Mammary epithelial cell (primary cell): ENCODE measurements at regions of chr5 and their contacts with region 1.

Region 1: GRCh38 chr5:54867310-54867944 is 118.0 kb downstream of the ESM1 start:
- DNase-seq: peak; percentile 16
- H3K4me3 ChIP-seq: no peak overlapping the region
- H3K27ac ChIP-seq: no peak overlapping the region
- H3K4me1 ChIP-seq: no peaks in the 10 kb centered on the region
- H3K27me3 ChIP-seq: peaks cover 3% of the 10 kb centered on the region
- CTCF ChIP-seq: peak; percentile 50 to 60

Region 2: GRCh38 chr5:54243473-54244080 is 623.9 kb before region 1 on chr5:
- CTCF ChIA-PET with region 1: interaction called, 4 read pairs
- dilution Hi-C with region 1: no loop called
- in situ Hi-C with region 1: no loop called
- intact Hi-C with region 1: loop called (anchors 10 kb)
- DNase-seq: peak; percentile 20
- H3K4me3 ChIP-seq: no peak overlapping the region
- H3K27ac ChIP-seq: no peak overlapping the region
- H3K4me1 ChIP-seq: no peaks in the 10 kb centered on the region
- H3K27me3 ChIP-seq: no peaks in the 10 kb centered on the region
- CTCF ChIP-seq: peak; percentile 72 to 81

Region 3: DNA sequence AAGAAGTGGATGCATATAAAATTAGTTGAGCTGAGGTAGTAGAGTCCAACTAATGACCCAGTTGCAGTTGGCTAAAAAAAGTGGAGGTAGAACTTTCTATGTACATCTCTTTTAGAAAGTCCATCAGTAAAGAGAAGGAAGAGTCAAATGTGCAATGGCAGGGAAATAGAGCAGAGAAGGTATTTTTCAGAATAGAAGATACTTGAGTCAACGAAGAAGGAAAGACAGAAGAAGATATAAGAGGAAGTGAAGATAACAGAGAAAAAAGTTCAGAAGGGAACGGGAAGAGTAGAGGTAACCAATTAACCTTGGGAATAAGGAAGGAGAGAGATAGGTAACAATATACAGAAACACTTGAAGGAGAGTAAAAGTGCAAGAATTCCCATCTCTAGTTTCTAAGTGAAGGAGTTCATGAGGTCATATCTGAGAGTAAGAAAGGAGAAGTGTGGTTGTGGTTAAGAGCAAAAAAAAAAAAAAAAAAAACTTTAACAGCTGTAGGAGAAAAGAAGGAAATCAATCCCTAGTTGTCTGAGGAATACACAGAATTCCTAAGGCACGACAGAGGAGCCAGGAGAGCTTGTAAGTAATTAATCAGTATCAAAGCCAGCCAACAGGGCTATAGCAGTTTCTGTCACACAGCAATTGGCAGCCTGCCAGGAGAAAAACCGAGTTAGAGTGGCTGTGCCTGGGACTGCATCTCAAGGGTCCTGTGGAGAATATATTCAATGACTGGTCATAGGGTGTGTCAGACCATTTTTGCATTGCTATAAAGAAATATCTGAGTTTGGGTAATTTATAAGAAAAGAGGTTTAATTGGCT is 618.0 kb before region 1 on chr5:
- CTCF ChIA-PET with region 1: no interaction called
- dilution Hi-C with region 1: no loop called
- in situ Hi-C with region 1: loop called (anchors 25 kb)
- intact Hi-C with region 1: loop called (anchors 10 kb)
- DNase-seq: no peak
- H3K4me3 ChIP-seq: no peak overlapping the region
- H3K27ac ChIP-seq: no peak overlapping the region
- H3K4me1 ChIP-seq: no peaks in the 10 kb centered on the region
- H3K27me3 ChIP-seq: no peaks in the 10 kb centered on the region
- CTCF ChIP-seq: no peak

Region 4: GRCh38 chr5:54643719-54644118 is 223.7 kb before region 1 on chr5:
- CTCF ChIA-PET with region 1: no interaction called
- dilution Hi-C with region 1: no loop called
- in situ Hi-C with region 1: no loop called
- intact Hi-C with region 1: no loop called
- DNase-seq: peak; percentile 95
- H3K4me3 ChIP-seq: no peak overlapping the region
- H3K27ac ChIP-seq: peak overlapping the region; percentile 91
- H3K4me1 ChIP-seq: peaks cover 42% of the 10 kb centered on the region
- H3K27me3 ChIP-seq: no peaks in the 10 kb centered on the region
- CTCF ChIP-seq: no peak

Region 5: GRCh38 chr5:54844905-54845566 is 22.4 kb before region 1 on chr5:
- CTCF ChIA-PET with region 1: interaction called, 6 read pairs
- dilution Hi-C with region 1: no loop called
- in situ Hi-C with region 1: no loop called
- intact Hi-C with region 1: loop called (anchors 2 kb)
- DNase-seq: peak; percentile 8
- H3K4me3 ChIP-seq: no peak overlapping the region
- H3K27ac ChIP-seq: no peak overlapping the region
- H3K4me1 ChIP-seq: peaks cover 6% of the 10 kb centered on the region
- H3K27me3 ChIP-seq: no peaks in the 10 kb centered on the region
- CTCF ChIP-seq: peak; percentile 24 to 43

Region 6: DNA sequence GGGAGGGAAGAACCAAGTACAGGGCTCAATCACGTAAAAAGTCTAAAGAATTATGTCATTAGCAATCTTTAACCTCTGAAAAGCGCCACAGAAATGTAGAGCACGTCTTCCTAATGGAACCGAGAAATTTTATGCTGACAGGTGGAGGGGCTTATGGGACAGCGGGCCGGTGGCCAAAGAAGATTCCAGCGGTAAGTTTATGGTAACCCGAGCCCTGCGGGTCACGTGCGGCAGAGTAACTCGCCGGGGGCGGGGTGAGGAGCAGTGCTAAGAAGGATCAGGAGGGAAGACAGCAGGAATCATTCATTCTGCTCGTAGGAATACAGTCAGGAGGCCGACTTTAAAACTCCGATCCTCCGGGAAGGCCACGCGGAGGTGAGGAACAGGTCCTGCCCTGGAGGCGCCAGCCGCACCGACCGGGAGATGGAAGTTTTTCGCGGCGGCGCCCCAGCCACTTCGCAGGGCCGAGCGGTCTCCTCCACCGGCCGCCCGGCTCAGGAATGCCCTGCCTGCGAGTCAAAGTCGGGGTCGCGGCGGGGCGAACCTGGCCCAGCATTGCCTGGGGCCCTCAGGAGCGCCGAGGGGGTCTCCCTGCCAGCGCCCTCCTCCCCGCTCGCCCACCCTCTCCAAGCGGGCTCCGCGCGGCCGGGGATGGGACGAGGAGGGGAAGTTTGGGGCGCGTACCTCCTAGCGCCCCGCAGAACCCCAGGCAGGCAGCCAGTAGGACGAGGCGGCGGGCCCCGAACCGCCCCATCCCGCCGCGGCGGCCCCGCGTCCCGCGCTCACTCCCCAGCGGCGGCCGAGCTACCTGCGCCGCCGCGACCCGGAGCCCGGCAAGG is 16.2 kb after region 1 on chr5:
- CTCF ChIA-PET with region 1: interaction called, 12 read pairs
- dilution Hi-C with region 1: no loop called
- in situ Hi-C with region 1: no loop called
- intact Hi-C with region 1: no loop called
- DNase-seq: no peak
- H3K4me3 ChIP-seq: peak overlapping the region in 1 of 3 experiments; percentile 3
- H3K27ac ChIP-seq: no peak overlapping the region
- H3K4me1 ChIP-seq: peaks cover 19% of the 10 kb centered on the region
- H3K27me3 ChIP-seq: peaks cover 16% of the 10 kb centered on the region
- CTCF ChIP-seq: no peak

Region 7: DNA sequence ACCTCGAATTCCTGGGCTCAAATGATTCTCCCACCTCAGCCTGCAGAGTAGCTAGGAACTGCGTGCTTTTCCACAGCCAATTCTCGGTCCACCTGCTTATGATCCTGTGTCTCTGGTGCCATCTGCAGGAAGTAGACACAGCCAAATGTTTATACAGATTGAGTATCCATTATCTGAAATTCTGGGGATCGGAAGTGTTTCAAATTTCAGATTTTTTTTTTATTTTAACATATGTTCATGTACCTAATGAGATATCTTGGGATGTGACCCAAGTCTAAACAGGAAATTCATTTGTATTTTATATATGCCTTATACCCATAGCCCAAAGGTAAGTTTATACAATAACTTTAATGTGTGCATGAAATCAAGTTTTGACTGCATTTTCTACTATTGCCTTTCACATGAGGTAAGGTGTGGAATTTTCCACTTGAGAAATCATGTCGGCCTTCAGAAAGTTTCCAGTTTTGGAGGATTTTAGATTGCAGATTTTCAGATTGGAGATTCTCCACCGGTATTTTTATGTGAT is 28.5 kb after region 1 on chr5:
- CTCF ChIA-PET with region 1: interaction called, 4 read pairs
- dilution Hi-C with region 1: no loop called
- in situ Hi-C with region 1: no loop called
- intact Hi-C with region 1: loop called (anchors 1 kb)
- DNase-seq: peak; percentile 42
- H3K4me3 ChIP-seq: no peak overlapping the region
- H3K27ac ChIP-seq: no peak overlapping the region
- H3K4me1 ChIP-seq: no peaks in the 10 kb centered on the region
- H3K27me3 ChIP-seq: peaks cover 4% of the 10 kb centered on the region
- CTCF ChIP-seq: peak; percentile 48 to 71

Region 8: DNA sequence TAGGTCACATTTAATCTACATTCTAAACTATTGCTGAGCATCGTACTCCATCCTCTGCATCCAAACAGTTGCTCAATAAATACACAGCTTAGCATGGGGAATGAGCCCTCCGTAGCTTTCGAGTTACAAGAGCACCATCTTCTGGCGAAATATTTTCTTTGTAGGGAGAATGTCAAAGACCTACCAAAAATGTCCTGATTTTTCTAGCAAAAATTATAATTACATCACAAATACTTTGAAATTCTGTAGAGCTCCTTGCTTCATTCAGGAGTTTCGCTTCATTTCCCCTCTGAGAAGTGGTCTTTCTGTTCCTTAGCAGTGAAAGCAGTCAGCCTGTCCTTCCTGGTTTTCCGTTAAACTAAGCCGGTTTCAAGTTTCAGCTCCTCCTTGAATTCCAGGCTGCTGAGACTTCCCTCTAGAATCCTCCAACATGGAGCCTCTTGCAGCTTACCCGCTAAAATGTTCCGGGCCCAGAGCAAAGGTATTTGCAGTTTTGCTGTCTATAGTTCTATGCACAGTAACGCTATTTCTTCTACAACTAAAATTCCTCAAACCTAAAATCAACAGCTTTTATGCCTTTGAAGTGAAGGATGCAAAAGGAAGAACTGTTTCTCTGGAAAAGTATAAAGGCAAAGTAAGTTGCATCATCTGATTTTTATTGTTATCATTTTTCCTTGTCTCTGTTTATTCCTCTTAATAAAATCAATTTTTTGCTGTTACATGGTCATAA is 292.5 kb after region 1 on chr5 and contains the start of gene GPX8:
- CTCF ChIA-PET with region 1: interaction called, 14 read pairs
- dilution Hi-C with region 1: no loop called
- in situ Hi-C with region 1: no loop called
- intact Hi-C with region 1: no loop called
- DNase-seq: peak; percentile 78
- H3K4me3 ChIP-seq: peak within 1 kb of the TSS; percentile 56 to 93 (median 92)
- H3K27ac ChIP-seq: peak within 1 kb of the TSS; percentile 90
- H3K4me1 ChIP-seq: peaks cover 8% of the 10 kb centered on the region
- H3K27me3 ChIP-seq: no peaks in the 10 kb centered on the region
- CTCF ChIP-seq: peak; percentile 49 to 63
- total RNA-seq, gene GPX8: 38.0 to 38.8 TPM